ENCODE measurements at regions of chr16 and their contacts with region 1.

Region 1: DNA sequence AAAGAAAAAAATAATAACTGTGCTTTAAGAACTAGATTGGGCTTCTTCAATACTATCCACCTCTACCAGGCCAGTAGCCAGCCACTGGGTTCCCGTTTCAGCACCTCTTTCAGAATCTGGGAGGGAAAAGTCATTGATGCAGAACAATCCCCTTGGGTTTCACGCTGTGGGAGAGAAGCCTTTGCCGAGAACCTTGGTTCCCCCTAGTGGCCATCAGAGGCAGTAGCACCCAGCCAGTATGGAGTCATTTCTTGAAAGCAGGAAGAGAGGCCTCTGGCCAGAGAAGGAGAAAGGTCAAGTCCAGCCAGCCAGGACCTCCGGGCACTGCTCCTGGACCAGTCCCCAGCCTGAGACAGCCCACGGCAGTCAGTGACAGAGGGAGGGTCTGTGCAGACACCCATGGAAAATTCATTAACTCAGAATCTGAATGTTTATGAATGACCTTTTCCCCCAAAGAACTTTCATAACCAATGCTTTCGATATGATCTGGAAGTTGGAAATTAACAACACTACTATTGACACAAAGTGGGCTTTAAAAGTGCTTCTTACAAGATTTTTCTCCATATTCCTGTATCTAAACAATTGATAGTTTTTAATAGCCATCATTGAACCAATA is 51.2 kb upstream of the CDH5 start:
- DNase-seq: peak; percentile 9
- ATAC-seq: peak; percentile 98
- H3K4me3 ChIP-seq: no peak overlapping the region
- H3K27ac ChIP-seq: no peak overlapping the region
- H3K4me1 ChIP-seq: no peaks in the 10 kb centered on the region
- H3K27me3 ChIP-seq: peaks cover 0 to 3% of the 10 kb centered on the region in 2 experiments; a peak in 1 of 4 replicates
- CTCF ChIP-seq: peak; percentile 93 to 99 (median 95)
- EP300 ChIP-seq: no peak
- POLR2A ChIP-seq: no peak
- RAD21 ChIP-seq: peak; percentile 79

Region 2: GRCh38 chr16:66275775-66276428 is 39.4 kb before region 1 on chr16:
- CTCF ChIA-PET with region 1: interaction called, 20 read pairs
- POLR2A ChIA-PET with region 1: no interaction called
- RAD21 ChIA-PET with region 1: interaction called, 7 read pairs
- SMC1A ChIA-PET with region 1: interaction called, 6 read pairs
- in situ Hi-C with region 1: no loop called
- intact Hi-C with region 1: loop called (anchors 1 kb)
- DNase-seq: no peak
- ATAC-seq: peak; percentile 54
- H3K4me3 ChIP-seq: no peak overlapping the region
- H3K27ac ChIP-seq: no peak overlapping the region
- H3K4me1 ChIP-seq: no peaks in the 10 kb centered on the region
- H3K27me3 ChIP-seq: no peaks in the 10 kb centered on the region; a peak in 1 of 4 replicates
- CTCF ChIP-seq: peak; percentile 52 to 64 (median 63); a peak in 5 of 6 replicates
- EP300 ChIP-seq: no peak
- POLR2A ChIP-seq: no peak
- RAD21 ChIP-seq: peak; percentile 34; the same call in 1 of the 2 replicates